ENCODE measurements at regions of chr15 and their contacts with region 1.

Region 1: DNA sequence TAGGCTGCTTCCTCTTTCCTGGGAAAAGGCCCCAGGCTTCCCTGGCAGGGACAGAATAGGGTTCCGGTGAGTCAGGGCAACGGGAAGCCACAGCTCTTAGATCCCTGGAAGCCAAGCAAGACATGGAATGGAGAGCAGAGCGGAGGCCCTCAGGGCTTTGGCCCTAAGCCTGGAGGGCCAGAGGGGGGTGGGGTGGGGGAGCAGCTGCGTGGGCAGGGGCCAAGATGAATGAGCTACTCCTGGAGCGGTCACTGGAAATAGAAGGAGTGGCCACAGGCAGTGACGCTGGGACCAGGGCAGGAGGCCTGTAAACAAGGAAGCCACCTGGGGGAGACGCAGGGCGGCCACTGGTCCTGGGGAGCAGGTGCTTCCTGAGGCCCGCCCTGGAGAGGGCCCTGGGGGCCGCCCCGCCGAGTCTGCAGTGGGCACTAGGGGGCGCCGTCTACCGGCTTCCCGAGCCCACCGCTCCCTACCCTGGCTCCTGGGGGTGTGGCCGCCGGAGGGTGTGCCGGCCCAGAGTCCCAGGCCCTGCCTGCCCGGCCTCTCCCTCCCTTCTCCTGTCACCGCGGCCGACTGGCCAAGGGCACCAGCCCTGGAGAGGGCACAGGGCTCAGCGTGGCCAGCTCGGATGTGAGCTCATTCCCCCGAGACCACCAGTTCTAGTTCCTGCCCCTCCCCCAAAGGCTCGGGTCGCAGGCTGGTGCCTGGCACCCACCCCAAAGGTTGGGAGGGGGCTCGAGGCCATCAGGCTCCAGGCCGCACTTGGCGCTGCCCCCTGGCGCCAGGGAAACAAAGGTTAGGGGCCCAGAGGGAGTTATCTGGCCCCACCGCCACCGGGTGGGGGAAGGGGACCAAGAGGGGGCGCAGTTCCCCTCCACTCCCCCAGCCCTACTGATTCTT is 12.1 kb downstream of the VPS18 start:
- DNase-seq: peak; percentile 98 to 99
- H3K4me3 ChIP-seq: peak overlapping the region in 1 of 3 donors; percentile 30
- H3K27ac ChIP-seq: peak overlapping the region; percentile 91 to 92 (median 91)
- H3K4me1 ChIP-seq: peaks cover 23 to 35% of the 10 kb centered on the region in 2 donors
- H3K27me3 ChIP-seq: no peaks in the 10 kb centered on the region
- CTCF ChIP-seq: peak; percentile 70 to 97 (median 84)
- POLR2A ChIP-seq: peak in 1 of 2 donors; percentile 64

Region 2: GRCh38 chr15:40941528-40942336 is 35.4 kb after region 1 on chr15:
- intact Hi-C with region 1: loop called (anchors 5 kb)
- DNase-seq: peak; percentile 74 to 76
- H3K4me3 ChIP-seq: peak overlapping the region in 2 of 3 donors; percentile 21 to 47
- H3K27ac ChIP-seq: peak overlapping the region; percentile 64 to 90 (median 89)
- H3K4me1 ChIP-seq: peaks cover 15 to 30% of the 10 kb centered on the region in 2 donors
- H3K27me3 ChIP-seq: no peaks in the 10 kb centered on the region
- CTCF ChIP-seq: peak in 5 of 6 experiments; percentile 15 to 97 (median 81)
- POLR2A ChIP-seq: peak in 1 of 2 donors; percentile 48